ENCODE measurements at regions of chr22 and their contacts with region 1.

Region 1: DNA sequence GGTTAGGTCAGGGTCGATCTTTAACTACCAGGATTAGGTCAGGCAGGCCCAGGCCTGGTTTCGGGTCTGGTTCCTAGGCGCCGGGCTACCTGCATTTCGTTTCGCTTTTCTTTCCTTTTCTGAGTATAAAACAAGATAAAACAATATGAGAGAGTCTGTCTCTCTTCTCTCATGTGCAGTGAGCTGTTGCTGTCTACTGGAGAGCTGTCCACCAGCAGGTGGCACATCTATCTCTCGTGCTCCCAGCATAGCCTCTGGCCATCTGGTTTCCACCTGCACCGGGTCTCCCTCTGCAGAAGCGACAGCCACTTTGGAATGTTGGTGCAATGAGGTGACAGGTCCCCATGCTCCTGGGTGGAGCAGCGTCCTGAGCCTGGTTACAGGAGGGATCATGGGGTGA is 27.6 kb downstream of the RIBC2 start:
- DNase-seq: no peak
- H3K4me3 ChIP-seq: no peak overlapping the region
- CTCF ChIP-seq: peak; percentile 83

Region 2: DNA sequence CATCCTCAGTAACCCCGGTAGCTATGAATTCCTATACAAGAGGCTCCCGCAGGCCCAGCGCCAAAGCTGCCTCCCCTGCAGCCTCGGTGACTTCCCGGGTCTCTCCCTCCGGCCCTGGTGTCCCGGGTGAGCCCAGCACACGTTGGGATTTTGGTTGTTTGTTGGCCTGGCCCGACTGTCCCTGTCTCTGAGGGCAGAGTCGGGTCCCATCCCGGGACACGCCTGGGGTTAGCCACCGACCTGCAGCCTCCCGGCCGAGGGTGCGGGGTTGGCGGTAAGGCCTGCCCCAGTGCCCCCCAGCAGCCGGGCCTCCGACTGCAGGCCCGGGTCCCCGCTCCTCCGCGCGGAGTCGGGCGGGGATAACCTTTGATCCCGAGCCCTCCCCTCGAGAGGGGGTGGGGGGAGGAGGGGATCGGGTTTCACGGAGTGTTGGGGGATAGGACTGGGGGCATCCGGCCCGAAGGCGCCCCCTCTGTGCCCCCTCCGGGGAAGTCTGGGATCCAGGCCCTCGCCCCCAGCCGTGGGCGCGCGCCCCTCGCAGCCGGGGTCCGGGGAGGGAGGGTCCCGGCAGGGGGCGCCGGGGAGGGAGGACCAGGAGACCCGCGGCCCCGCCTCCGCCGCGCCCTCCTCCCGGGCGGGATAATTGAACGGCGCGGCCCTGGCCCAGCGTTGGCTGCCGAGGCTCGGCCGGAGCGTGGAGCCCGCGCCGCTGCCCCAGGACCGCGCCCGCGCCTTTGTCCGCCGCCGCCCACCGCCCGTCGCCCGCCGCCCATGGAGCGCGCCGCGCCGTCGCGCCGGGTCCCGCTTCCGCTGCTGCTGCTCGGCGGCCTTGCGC is 61.3 kb after region 1 on chr22 and contains the start of gene FBLN1:
- CTCF ChIA-PET with region 1: interaction called, 10 read pairs
- POLR2A ChIA-PET with region 1: no interaction called
- DNase-seq: no peak
- H3K4me3 ChIP-seq: peak within 1 kb of the TSS; percentile 87
- CTCF ChIP-seq: peak; percentile 32

Region 3: DNA sequence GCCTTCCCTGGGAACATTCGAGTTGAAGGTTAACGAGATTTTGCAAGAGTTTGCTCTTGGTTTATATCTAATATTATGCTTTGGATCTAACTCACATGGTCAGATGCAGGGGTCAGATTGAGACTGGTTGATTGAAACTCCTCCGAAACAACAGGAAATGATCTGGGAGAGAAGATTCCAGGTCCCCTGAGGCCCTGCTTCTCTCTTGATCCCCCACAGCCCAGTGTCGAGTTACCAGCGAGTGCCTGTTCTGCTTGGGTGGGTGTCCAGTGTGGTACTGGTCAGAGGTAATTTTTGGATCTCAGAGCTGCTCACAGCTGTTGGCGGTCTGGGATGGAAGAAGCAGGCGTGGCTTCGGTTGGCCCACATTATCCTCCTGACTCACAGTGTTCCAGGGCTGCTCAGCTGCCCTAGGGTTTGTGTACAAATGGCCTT is 70.7 kb after region 1 on chr22:
- CTCF ChIA-PET with region 1: interaction called, 23 read pairs
- POLR2A ChIA-PET with region 1: no interaction called
- DNase-seq: peak; percentile 61
- H3K4me3 ChIP-seq: no peak overlapping the region
- CTCF ChIP-seq: no peak

Measured in AG04449 (cell line).